ENCODE measurements at regions of chr3 and their contacts with region 1.

Region 1: GRCh38 chr3:158845765-158846350 is 44.0 kb downstream of the MFSD1 start:
- DNase-seq: no peak
- H3K4me3 ChIP-seq: no peak overlapping the region
- H3K27ac ChIP-seq: no peak overlapping the region
- H3K4me1 ChIP-seq: peaks cover 0 to 4% (median 0%) of the 10 kb centered on the region in 3 donors
- H3K27me3 ChIP-seq: no peaks in the 10 kb centered on the region
- CTCF ChIP-seq: peak; percentile 41 to 73 (median 67)
- POLR2A ChIP-seq: no peak

Region 2: DNA sequence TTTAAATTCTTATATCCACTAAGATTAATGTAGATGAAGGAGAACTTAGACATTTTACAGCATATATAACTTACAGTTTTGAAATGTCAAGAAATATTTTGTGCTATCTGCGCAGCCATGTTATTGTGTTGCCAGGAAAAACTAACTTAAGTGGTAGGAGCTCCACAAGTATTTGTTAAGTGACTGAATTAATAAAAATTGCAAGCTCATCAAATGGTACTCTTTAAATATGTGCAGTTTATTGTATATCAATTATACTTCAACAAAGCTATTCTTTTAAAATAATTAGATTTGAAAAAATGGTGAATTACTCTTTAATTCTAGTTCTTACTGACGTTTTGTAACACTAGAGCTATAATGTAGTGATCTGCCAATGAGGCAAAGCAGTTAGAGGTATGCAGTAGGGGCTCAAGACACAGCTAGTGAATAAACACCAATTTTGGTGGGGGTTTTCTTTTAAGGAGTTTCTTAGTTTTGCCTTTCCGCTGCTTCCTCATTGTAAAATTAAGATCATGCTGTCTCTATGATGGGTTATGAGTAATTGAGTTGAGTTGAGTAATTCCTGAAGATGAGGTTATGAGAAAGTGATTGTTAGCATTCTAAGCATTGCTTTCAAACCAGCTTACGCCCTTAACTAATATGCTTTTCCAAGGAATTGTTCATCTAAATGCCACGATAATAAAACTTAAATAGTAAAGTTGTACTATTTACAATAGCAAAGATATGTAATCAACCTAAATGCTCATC is 162.5 kb before region 1 on chr3:
- intact Hi-C with region 1: no loop called
- DNase-seq: no peak
- H3K4me3 ChIP-seq: no peak overlapping the region
- H3K27ac ChIP-seq: no peak overlapping the region
- H3K4me1 ChIP-seq: no peaks in the 10 kb centered on the region
- H3K27me3 ChIP-seq: no peaks in the 10 kb centered on the region
- CTCF ChIP-seq: no peak
- POLR2A ChIP-seq: no peak

Region 3: DNA sequence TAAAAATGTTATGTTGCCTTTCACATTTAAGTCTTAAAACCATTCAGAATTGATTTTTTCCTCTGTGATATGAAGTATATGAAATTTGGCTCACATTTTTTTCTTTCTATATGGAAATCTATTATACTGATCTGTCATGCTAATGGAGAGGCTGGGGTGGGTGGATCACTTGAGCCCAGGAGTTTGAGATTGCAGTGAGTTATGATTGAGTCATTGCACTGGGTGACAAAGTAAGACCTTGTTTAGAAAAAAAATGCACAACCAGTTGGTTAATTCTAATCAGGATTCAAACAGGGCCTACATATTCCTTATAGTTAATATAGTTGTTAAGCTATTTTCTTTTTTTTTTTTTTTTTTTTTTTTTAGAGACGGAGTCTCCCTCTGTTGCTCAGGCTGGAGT is 186.5 kb after region 1 on chr3:
- intact Hi-C with region 1: no loop called
- DNase-seq: no peak
- H3K4me3 ChIP-seq: no peak overlapping the region
- H3K27ac ChIP-seq: no peak overlapping the region
- H3K4me1 ChIP-seq: no peaks in the 10 kb centered on the region
- H3K27me3 ChIP-seq: no peaks in the 10 kb centered on the region
- CTCF ChIP-seq: no peak
- POLR2A ChIP-seq: no peak

Region 4: GRCh38 chr3:159260049-159260662 is 414.3 kb after region 1 on chr3:
- intact Hi-C with region 1: loop called (anchors 5 kb)
- DNase-seq: no peak
- H3K4me3 ChIP-seq: no peak overlapping the region
- H3K27ac ChIP-seq: no peak overlapping the region
- H3K4me1 ChIP-seq: no peaks in the 10 kb centered on the region
- H3K27me3 ChIP-seq: peaks cover 0 to 7% (median 0%) of the 10 kb centered on the region in 4 donors
- CTCF ChIP-seq: peak; percentile 34 to 78 (median 66)
- POLR2A ChIP-seq: no peak

Measured in esophagus squamous epithelium (tissue), 5 donors.